Ascending aorta (tissue), 2 donors: ENCODE measurements at regions of chr2 and their contacts with region 1.

Region 1: DNA sequence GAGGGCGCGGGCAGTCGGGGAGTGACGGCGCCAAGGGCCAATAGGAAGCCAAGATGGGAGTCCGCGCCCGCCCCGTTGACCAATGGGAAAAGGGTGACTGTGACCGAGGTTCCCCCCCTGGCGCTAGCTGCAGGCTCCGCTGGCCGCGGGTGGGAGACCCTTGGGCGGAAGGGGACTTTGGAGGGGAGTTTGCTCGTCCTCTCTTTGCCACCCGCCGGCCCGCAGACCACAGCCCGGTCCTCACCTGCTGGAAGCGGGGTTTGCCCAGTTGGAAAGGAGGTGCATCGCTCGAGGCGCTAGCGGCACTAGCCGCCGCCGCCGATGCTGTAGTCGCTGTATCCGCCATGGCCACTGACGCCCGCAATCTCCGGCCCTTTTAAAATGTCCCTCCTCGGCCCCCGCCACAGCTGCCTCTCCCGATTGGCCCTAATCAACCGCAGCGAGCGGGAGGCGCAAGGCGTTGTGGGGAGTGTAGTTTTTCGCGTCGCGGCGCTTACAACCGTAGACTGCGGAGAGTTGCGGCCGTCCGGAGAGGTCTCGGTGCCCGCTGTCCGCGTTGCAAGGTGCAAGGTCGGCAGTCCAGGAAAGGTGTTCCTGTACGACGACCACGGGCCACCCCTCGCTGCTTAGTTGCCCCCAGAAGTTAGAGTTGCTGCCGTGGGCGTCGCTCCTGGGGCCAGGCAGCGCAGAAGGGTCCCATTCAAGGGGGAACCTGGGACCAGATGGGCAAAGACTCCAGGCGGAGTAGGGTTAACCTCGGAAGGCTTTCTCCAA is at the start of gene SFXN5:
- DNase-seq: peak; percentile 90 to 99
- H3K4me3 ChIP-seq: peak within 1 kb of the TSS; percentile 91 to 92
- H3K27ac ChIP-seq: peak within 1 kb of the TSS; percentile 84 to 93
- H3K4me1 ChIP-seq: peaks cover 10 to 15% of the 10 kb centered on the region in 2 donors
- H3K27me3 ChIP-seq: no peaks in the 10 kb centered on the region
- CTCF ChIP-seq: peak; percentile 21 to 24 (median 24)
- total RNA-seq, gene SFXN5: 9.3 TPM

Region 2: GRCh38 chr2:72825241-72826155 is 246.0 kb before region 1 on chr2 and contains the start of gene EXOC6B:
- intact Hi-C with region 1: loop called (anchors 5 kb)
- DNase-seq: peak; percentile 58 to 94
- H3K4me3 ChIP-seq: peak within 1 kb of the TSS; percentile 75 to 77
- H3K27ac ChIP-seq: peak within 1 kb of the TSS; percentile 70 to 75
- H3K4me1 ChIP-seq: peaks cover 0 to 4% of the 10 kb centered on the region in 2 donors
- H3K27me3 ChIP-seq: no peaks in the 10 kb centered on the region
- CTCF ChIP-seq: peak in 1 of 3 experiments; percentile 14
- total RNA-seq, gene EXOC6B: 32.4 TPM

Region 3: DNA sequence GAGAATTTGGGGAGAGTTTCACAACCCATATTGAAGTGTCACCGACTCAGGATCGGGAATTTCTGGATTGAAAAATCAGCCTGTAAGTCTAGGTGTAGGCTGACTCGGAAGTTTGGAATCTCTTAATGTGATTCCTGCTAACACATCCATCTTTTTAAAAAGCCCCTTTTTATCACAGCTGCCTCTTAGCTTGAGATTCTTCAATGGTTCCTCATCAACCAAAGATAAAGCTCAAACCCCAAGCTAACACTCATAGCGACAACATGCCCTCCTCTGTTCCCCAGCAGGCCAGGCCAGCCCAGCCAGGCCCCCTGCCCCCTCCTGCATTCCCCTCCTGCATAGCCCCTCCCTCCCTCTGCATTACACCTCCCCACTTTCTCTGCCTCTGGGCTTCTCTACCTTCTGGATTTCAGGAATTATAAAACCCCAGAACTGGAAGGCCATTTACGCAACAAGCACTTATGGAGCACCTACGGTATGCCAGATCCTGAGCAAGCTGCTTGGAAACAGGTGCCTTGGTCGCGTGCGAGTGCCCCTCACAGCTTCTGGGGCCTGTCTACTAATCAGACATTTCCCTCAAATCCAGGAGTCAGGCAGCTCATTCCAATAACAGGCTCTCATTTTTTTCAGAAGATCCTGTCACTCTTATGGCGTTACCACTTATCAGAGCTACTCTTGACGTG is 90.9 kb before region 1 on chr2:
- intact Hi-C with region 1: no loop called
- DNase-seq: no peak
- H3K4me3 ChIP-seq: no peak overlapping the region
- H3K27ac ChIP-seq: no peak overlapping the region
- H3K4me1 ChIP-seq: no peaks in the 10 kb centered on the region
- H3K27me3 ChIP-seq: no peaks in the 10 kb centered on the region
- CTCF ChIP-seq: no peak

Region 4: GRCh38 chr2:72993147-72993932 is 78.2 kb before region 1 on chr2:
- intact Hi-C with region 1: loop called (anchors 2 kb)
- DNase-seq: peak in 1 of 2 donors; percentile 64
- H3K4me3 ChIP-seq: no peak overlapping the region
- H3K27ac ChIP-seq: no peak overlapping the region
- H3K4me1 ChIP-seq: no peaks in the 10 kb centered on the region
- H3K27me3 ChIP-seq: no peaks in the 10 kb centered on the region
- CTCF ChIP-seq: peak; percentile 80 to 85 (median 82)

Region 5: GRCh38 chr2:73053316-73054114 is 18.0 kb before region 1 on chr2:
- intact Hi-C with region 1: no loop called
- DNase-seq: peak in 1 of 2 donors; percentile 35
- H3K4me3 ChIP-seq: no peak overlapping the region
- H3K27ac ChIP-seq: no peak overlapping the region
- H3K4me1 ChIP-seq: no peaks in the 10 kb centered on the region
- H3K27me3 ChIP-seq: no peaks in the 10 kb centered on the region
- CTCF ChIP-seq: no peak

Region 6: DNA sequence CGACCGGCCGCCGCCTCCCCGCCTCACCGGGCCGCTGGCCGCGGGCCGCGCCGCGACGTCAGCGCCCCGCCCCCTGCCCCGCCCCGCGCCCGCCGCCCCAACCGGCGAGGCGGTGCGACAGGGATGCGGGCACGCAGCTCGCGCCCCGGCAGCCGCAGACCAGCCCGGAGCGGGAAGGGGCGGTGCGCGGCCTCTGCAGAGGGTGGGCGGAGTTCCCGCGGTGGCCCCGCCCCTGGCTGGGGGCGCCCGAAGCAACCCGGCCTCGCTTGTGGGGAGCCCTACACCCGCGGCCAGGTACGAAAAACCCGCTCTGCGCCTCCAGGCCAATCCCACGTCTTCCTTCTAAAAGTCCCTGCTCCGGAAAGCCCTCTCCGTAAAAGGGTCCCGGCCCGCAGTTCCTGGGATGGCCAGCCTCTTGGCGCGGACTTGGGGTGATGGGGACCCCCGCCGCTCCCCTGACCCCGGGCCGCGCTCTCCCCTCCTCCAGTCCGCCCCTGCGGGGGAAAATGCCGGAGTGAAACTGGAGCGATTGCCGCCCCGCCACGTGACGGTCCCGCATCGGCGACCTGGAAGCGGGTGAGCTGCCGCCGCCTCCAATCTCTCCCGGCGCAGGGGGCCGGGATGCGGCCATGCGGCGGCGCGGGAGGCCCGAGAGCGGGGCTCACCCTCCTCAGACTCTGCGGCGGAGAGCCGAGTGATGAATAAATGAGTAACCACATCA is 41.5 kb after region 1 on chr2 and contains the start of gene RAB11FIP5:
- intact Hi-C with region 1: loop called (anchors 1 kb)
- DNase-seq: peak in 1 of 2 donors; percentile 90
- H3K4me3 ChIP-seq: peak within 1 kb of the TSS; percentile 78 to 84
- H3K27ac ChIP-seq: peak within 1 kb of the TSS; percentile 92 to 98
- H3K4me1 ChIP-seq: peaks cover 0 to 18% of the 10 kb centered on the region in 2 donors
- H3K27me3 ChIP-seq: no peaks in the 10 kb centered on the region
- CTCF ChIP-seq: peak in 1 of 3 experiments; percentile 12
- total RNA-seq, gene RAB11FIP5: 95.3 TPM

Region 7: DNA sequence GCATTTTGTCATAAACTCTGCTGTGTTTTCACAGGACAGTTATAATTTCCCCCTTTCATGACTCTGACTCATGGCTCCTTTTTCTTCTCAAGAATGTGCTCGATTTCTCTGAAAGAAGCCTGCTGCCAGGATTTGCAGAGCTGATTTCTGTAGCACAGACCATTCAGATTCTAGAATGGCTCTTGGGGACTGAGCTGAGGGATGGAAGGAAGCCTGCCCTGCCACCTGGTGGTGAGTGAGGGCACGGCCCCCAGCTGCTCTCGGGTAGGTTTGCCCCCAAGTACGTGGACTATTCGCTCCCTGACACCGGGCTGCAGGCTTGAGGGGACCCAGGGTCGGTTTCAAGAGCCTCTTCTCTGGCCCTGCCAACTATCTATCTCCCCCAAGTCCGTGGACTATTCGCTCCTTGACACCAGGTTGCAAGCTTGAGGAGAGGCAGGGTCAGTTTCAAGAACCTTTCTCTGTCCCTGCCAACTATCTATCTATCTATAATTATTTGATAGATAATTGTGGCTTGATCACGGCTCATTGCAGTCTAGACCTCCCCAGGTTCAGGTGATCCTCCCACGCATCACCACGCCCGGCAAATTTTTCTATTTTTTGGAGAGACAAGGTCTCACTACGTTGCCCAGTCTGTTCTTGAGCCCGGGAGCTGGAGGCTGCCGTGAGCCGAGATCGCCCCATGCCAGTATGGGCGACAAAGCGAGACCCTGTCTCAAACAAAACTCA is 141.1 kb after region 1 on chr2:
- intact Hi-C with region 1: loop called (anchors 1 kb)
- DNase-seq: peak; percentile 19 to 92
- H3K4me3 ChIP-seq: peak overlapping the region in 1 of 2 donors; percentile 12
- H3K27ac ChIP-seq: peak overlapping the region; percentile 81 to 83
- H3K4me1 ChIP-seq: peaks cover 0 to 20% of the 10 kb centered on the region in 2 donors
- H3K27me3 ChIP-seq: no peaks in the 10 kb centered on the region
- CTCF ChIP-seq: peak; percentile 87 to 92 (median 88)

Region 8: DNA sequence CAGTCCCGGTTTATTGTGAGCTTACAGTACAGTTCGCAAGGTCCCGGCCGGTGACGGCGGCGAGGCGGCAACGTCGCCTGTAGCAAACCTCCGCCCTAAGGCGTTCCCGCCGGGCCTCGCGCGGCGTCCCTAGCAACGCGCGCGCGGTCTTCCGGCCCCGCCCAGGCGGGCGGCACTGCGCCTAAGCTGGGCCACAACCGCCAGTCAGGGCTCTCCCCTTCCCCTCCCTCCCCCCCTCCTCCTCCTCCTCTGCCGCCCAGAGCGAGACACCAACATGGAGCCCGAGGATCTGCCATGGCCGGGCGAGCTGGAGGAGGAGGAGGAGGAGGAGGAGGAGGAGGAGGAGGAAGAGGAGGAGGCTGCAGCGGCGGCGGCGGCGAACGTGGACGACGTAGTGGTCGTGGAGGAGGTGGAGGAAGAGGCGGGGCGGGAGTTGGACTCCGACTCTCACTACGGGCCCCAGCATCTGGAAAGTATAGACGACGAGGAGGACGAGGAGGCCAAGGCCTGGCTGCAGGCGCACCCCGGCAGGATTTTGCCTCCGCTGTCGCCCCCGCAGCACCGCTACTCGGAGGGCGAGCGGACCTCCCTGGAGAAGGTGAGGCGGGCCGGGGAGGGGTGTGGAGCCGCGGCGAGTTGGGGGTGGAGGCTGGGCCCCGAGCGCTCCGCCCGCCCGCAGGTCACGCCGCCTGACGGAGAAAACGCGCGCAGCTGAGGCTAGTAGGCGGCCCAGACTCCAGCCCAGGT is 314.2 kb after region 1 on chr2 and contains the start of gene ALMS1:
- intact Hi-C with region 1: loop called (anchors 2 kb)
- DNase-seq: peak; percentile 74 to 92
- H3K4me3 ChIP-seq: peak within 1 kb of the TSS; percentile 69 to 86
- H3K27ac ChIP-seq: peak within 1 kb of the TSS; percentile 80 to 86
- H3K4me1 ChIP-seq: peaks cover 0 to 8% of the 10 kb centered on the region in 2 donors
- H3K27me3 ChIP-seq: no peaks in the 10 kb centered on the region
- CTCF ChIP-seq: peak in 1 of 3 experiments; percentile 45
- total RNA-seq, gene ALMS1: 12.8 TPM